ENCODE measurements at regions of chr13 and their contacts with region 1.

Region 1: GRCh38 chr13:19863323-19864023 is at the start of gene ZMYM5:
- DNase-seq: peak; percentile 96
- H3K4me3 ChIP-seq: peak within 1 kb of the TSS; percentile 71 to 89 (median 77)
- H3K27ac ChIP-seq: peak within 1 kb of the TSS; percentile 74
- H3K4me1 ChIP-seq: 0 out of 7 replicates have a peak, but pooled peaks cover 0 to 2% (median 0%) of the 10 kb centered on the region in 4 experiments
- H3K27me3 ChIP-seq: no peaks in the 10 kb centered on the region
- CTCF ChIP-seq: no peak
- EP300 ChIP-seq: no peak
- POLR2A ChIP-seq: peak; percentile 69 to 78
- RAD21 ChIP-seq: no peak; a peak in 1 of 4 replicates
- total RNA-seq, gene ZMYM5: 7.9 and 8.4 TPM in 2 replicates

Region 2: DNA sequence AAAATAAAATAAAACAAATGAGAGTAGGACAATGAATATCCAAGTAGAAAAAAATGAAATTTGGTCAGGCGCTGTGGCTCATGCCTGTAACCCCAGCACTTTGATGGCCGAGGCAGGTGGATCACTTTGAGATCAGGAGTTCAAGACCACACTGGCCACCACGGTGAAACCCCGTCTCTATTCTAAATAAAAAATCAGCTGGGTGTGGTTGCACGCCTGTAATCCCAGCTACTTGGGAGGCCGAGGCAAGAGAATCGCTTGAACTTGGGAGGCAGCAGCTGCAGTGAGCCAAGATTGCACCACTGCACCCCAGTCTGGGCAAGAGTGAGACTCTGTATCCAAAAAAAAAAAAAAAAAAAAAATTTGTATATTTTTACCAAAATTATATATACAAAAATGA is 18.2 kb after region 1 on chr13:
- CTCF ChIA-PET with region 1: interaction called, 16 read pairs
- POLR2A ChIA-PET with region 1: interaction called, 6 read pairs
- DNase-seq: no peak
- H3K4me3 ChIP-seq: no peak overlapping the region
- H3K27ac ChIP-seq: no peak overlapping the region
- H3K4me1 ChIP-seq: no peaks in the 10 kb centered on the region
- H3K27me3 ChIP-seq: no peaks in the 10 kb centered on the region
- CTCF ChIP-seq: no peak
- EP300 ChIP-seq: no peak
- POLR2A ChIP-seq: no peak
- RAD21 ChIP-seq: no peak

Measured in H1 (cell line).